Posterior vena cava (tissue), 2 donors: ENCODE measurements at regions of chr7 and their contacts with region 1.

Region 1: DNA sequence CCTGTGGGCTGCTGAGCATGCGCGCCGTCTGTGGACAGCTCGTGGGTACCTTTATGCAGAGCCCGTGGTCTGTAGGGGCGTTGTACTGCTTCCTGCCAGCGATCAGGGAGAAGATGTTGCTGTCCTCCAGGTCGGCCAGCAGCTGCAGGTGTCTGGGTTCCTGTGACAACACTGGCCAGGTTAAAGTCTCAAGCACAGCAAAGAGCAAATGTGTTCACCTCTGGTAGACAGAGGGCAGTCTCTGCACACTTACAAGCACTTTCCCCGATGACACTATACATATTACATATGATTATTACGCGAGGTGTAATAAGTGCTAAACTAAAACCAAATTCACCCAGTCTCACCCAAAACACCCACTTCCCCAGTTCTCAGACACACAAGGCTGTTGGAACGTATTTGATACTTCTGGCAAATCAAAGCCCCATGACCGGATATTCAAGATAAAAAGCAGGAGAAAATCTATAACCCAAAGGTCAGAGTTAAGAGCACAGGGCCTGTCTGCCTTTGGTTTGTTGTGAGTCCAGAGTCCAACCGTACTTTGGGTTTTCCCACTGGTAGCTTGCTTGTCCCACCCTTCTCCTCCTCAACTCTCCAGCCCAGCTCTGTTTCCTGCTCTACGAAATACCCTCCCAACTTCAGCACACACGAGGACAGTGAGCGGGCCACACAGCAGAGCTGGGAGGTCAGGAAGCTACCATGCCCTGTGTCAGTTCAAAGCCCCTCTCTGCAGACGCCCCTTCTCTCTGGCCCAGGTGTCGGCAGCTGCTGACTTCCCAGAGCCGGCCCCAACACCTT is 49.7 kb upstream of the DDC start:
- DNase-seq: no peak

Region 2: GRCh38 chr7:50590535-50590934 is 24.4 kb before region 1 on chr7:
- intact Hi-C with region 1: loop called in 1 of 2 experiments (anchors 1 kb)
- DNase-seq: no peak